ENCODE measurements at regions of chr7 and their contacts with region 1.

Region 1: GRCh38 chr7:1758028-1758858 is 88.2 kb downstream of the ELFN1 start:
- DNase-seq: peak; percentile 53 to 67 (median 62)
- H3K4me3 ChIP-seq: no peak overlapping the region
- H3K27ac ChIP-seq: no peak overlapping the region
- H3K4me1 ChIP-seq: peaks cover 0 to 4% (median 2%) of the 10 kb centered on the region in 4 experiments
- H3K27me3 ChIP-seq: peaks cover 0 to 7% (median 4%) of the 10 kb centered on the region in 5 experiments

Region 2: DNA sequence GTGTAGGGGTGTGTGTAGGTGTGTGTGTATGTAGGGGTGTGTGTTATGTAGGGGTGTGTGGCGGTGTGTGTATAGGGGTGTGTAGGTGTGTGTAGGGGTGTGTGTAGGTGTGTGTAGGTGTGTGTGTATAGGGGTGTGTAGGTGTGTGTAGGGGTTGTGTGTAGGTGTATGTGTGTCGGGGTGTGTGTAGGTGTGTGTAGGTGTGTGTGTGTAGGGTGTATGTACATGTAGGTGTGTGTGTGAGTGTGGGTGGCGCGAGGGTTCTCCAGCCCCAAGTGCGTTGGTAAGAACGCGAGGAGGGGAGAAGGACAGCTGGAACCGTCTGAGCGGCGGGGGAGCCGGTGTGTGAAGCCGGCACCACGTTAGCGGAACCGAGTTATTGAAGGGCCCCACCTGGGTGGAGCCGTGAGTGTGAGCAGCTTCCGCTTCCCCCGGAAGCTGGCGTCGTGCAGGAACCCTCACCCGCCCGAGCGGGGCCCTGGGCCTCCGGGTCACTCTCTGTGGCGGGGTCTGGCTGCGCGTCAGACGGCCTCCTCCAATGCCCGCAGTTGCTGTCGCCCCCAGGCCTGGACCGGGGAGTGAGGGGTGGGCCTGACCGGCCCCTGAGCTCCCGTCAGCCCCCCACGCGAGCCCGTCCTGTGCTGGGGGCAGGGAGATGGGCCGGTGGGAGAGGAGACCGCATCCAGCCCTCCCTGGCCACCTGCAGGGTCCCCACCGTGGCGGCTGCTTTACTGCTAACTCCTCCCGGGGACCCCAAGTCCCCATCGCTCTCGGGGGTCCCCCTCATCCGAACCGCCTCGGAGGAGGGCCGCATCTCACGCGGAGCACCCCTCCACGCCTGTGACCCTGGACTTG is 138.9 kb before region 1 on chr7:
- CTCF ChIA-PET with region 1: no interaction called
- POLR2A ChIA-PET with region 1: no interaction called
- DNase-seq: peak in 1 of 3 donors; percentile 34
- H3K4me3 ChIP-seq: no peak overlapping the region
- H3K27ac ChIP-seq: no peak overlapping the region
- H3K4me1 ChIP-seq: no peaks in the 10 kb centered on the region
- H3K27me3 ChIP-seq: peaks cover 0 to 3% (median 0%) of the 10 kb centered on the region in 5 experiments

Region 3: DNA sequence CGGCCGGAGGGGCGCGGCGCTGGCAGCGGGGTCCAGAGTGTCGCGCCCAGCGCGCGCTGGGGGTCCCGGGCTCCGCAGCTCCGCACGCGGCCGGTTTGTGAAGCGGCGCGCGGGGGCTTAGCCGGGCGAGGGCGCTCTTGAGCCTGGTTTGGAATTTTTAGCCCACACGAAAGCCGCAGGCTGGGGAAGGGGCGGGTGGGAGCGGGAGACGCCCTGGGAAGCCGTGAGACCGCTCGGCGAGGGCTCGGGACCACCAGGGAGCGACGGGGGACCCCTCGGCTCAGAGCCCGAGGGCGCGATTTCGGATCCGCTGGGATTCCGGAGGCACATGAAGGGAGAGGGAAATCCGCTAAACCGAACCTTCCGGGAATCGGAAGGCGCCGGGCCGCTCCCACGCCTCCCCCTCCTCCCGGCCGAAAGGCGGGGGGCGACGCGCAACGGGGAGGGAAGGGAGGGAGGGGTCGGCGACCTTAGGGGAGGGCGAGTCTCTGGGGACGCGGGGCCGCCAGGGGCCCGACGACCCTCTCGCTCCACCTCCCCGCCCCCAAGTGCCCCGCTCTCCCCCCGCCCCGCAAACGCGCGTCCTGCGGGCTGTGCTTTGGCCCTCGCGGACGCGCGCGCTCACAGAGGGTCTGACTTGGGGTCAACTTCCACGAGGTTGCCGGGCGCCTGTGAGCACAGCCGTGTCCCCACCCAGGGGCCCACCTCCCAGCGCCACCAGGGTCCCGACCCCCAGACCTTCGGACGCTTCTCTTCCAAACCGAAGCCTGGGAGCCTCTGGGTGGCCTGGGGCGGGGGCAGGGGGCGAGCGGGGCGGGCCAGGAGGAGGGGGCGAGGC is 93.3 kb before region 1 on chr7:
- CTCF ChIA-PET with region 1: interaction called, 12 read pairs
- POLR2A ChIA-PET with region 1: no interaction called
- DNase-seq: peak; percentile 58 to 77 (median 74)
- H3K4me3 ChIP-seq: peak overlapping the region in 6 of 7 experiments; percentile 46 to 69 (median 62)
- H3K27ac ChIP-seq: no peak overlapping the region
- H3K4me1 ChIP-seq: peaks cover 0 to 38% (median 26%) of the 10 kb centered on the region in 4 experiments
- H3K27me3 ChIP-seq: peaks cover 5 to 85% (median 27%) of the 10 kb centered on the region in 5 experiments

Measured in common myeloid progenitor, CD34-positive (primary cell).